ENCODE measurements at regions of chr17 and their contacts with region 1.

Region 1: DNA sequence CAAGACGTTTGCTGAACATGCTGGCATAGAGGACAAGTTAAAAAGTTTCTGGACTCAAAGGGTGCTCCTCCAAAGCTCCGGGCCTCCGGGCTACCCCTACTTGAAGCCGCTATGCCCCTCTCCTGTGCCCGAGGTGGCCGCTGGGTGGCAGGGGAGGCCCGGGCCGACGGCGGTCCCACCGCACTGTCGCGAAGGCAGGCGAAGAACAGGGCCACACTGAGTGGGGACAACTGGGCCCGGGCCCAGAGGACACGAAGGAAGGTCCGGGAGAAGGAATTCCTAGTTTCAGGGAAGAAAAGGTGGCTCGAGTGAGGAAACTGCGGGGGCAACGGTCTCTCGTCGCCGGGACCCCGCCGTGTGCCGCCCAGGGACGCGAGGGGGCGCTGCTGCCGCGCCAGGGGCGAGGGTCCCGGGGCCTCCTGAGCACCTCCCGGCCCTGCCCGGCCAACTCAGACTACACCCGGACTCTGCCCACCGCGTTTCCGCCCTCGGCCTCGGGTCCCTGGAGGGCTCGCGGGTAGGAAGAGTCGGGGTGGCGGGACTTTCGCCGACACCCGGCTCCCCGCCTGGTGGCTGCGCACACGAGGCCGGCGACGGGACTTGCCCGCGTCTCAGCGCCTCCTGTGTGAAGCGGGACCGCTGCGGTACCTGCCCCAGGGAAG is 885 bp upstream of the CHCT1 start:
- DNase-seq: peak; percentile 60 to 64
- H3K4me3 ChIP-seq: peak overlapping the region in 2 of 3 donors; percentile 40 to 42
- H3K27ac ChIP-seq: peak overlapping the region in 1 of 3 donors; percentile 15
- H3K4me1 ChIP-seq: no peaks in the 10 kb centered on the region
- H3K27me3 ChIP-seq: no peaks in the 10 kb centered on the region
- CTCF ChIP-seq: peak; percentile 84 to 92 (median 88)
- POLR2A ChIP-seq: no peak

Region 2: DNA sequence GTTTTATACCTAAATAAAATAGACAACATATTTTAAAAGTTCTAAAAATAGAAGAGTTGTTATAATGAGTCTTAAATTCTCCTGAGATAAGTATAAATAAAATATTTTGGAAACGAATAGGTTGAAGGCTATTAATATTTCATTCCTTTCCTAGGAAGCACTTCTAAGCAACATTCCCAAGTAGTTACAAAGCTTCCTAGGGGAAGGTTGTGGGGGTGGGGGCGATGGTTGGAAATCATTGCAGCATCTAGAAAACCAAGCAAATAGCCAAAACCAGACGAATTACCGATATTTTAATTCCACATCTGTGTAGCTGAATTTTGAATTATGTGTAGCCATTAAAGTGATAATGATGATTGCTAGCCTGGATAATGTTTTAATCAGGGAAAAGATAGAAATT is 741.1 kb before region 1 on chr17:
- intact Hi-C with region 1: no loop called
- DNase-seq: no peak
- H3K4me3 ChIP-seq: no peak overlapping the region
- H3K27ac ChIP-seq: no peak overlapping the region
- H3K4me1 ChIP-seq: peaks cover 0 to 4% of the 10 kb centered on the region in 2 donors
- H3K27me3 ChIP-seq: no peaks in the 10 kb centered on the region
- CTCF ChIP-seq: no peak
- POLR2A ChIP-seq: no peak

Region 3: DNA sequence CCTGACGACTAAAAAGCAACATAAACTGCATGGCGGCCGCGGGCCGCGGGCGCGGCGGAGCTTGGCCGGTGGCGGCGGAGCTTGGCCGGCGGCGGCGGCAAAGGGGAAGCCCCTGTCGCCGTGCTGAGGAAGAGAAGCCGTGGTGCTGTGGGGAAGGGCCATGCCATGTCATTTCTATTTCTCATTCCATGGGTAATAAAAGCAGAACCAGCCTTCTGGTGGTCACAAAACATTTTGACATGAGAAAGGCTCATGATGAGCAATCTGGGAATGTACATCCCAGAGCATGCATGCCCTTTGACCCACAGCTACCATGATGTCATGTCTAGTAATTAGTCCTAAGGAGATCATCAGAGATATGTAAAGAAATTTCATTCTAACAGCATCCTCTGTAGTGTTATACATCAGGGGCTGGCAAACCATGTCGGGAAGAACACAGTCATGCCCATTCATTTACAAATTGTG is 318.7 kb before region 1 on chr17:
- intact Hi-C with region 1: loop called (anchors 10 kb)
- DNase-seq: peak; percentile 11 to 21
- H3K4me3 ChIP-seq: peak overlapping the region in 1 of 3 donors; percentile 1
- H3K27ac ChIP-seq: no peak overlapping the region
- H3K4me1 ChIP-seq: no peaks in the 10 kb centered on the region
- H3K27me3 ChIP-seq: no peaks in the 10 kb centered on the region
- CTCF ChIP-seq: no peak
- POLR2A ChIP-seq: no peak

Measured in thyroid gland (tissue), 4 donors.